Naive thymus-derived CD8-positive, alpha-beta T cell (primary cell): ENCODE measurements at regions of chr17 and their contacts with region 1.

Region 1: DNA sequence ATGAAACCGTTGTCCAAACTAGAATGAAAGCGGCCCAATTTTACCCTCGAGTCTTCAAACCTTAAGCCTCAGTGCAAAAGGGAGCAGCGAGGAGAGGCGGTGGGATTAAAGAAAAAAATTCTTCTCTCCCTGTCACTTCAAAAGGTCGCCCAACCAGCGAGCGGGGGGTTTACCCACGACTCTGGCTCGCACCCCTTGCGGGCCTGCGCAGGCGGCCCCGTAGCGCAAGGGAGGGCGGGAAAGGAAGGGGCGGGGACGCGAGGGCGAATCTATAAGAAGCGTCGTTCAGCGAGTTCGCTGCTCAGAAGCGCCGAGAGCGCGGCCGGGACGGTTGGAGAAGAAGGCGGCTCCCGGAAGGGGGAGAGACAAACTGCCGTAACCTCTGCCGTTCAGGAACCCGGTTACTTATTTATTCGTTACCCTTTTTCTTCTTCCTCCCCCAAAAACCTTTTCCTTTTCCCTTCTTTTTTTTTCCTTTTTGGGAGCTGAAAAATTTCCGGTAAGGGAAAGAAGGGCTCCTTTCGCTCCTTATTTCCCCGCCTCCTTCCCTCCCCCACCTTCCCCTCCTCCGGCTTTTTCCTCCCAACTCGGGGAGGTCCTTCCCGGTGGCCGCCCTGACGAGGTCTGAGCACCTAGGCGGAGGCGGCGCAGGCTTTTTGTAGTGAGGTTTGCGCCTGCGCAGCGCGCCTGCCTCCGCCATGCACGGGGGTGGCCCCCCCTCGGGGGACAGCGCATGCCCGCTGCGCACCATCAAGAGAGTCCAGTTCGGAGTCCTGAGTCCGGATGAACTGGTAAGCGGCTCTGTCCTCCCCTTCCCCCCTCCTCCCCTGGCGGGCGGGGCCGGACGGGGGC is at the start of gene POLR2A:
- DNase-seq: peak; percentile 96 to 99 (median 98)
- ATAC-seq: peak; percentile 59 to 67
- H3K4me3 Mint-ChIP-seq: peak within 1 kb of the TSS; percentile 95 to 100 (median 99)
- H3K27ac Mint-ChIP-seq: peak within 1 kb of the TSS; percentile 97 to 100 (median 100)
- H3K4me1 Mint-ChIP-seq: peaks cover 46 to 80% (median 75%) of the 10 kb centered on the region in 4 donors
- H3K27me3 Mint-ChIP-seq: no peaks in the 10 kb centered on the region
- polyA plus RNA-seq, gene POLR2A: 31.1 to 68.0 (median 47.3) TPM

Region 2: DNA sequence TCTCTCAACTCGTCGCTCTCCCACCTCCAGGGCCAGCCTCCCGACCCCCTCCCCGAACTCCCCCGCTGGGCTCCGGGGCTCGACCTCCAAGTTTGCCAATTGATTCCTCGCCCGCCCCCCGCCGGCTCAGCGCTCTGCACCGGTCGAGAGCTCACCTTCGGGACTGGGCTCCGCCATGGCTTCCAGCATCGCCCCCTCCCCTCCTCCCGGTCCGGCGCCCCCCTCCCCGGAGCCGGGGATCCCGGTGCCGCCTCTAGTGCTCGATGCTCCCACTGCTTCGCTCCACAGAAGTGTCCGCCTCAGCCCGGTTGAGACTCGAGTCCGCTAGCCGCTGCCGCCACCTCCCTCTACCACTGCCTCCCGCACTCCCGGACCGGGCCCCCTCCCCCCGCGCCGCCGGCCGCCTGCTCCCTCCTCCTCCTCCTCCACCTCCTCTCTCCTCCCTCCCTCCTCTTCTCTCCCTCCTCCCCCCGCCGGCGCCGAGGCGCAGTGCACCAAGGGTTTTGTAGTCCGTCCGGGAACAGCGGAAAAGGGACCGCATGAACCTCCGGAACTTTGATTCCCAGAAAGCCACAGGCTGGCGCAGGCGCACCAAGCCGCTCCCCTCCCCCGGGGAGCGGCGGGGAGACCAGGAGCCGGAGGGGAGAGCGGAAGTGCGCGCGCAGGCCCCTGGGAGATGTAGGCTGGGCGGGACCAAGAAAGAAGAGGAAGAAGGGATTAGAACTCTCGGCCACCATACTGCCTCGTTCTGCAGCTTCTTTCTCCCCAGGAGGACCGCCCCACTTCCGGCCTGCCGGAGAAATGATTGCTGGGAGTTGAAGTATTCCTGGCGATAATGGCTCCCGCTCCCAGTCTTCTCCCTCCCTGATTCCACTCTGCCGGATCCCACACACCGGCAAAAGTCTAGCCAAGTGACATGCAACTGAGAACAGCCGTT is 244.9 kb before region 1 on chr17 and contains the start of gene PHF23:
- POLR2A ChIA-PET with region 1: interaction called, 10 read pairs
- DNase-seq: peak; percentile 92 to 98 (median 96)
- ATAC-seq: peak; percentile 51 to 67
- H3K4me3 Mint-ChIP-seq: peak within 1 kb of the TSS; percentile 83 to 100 (median 96)
- H3K27ac Mint-ChIP-seq: peak within 1 kb of the TSS; percentile 81 to 100 (median 98)
- H3K4me1 Mint-ChIP-seq: peaks cover 46 to 75% (median 63%) of the 10 kb centered on the region in 4 donors
- H3K27me3 Mint-ChIP-seq: peaks cover 0 to 4% (median 0%) of the 10 kb centered on the region in 5 donors
- polyA plus RNA-seq, gene PHF23: 18.1 to 35.7 (median 22.2) TPM

Region 3: DNA sequence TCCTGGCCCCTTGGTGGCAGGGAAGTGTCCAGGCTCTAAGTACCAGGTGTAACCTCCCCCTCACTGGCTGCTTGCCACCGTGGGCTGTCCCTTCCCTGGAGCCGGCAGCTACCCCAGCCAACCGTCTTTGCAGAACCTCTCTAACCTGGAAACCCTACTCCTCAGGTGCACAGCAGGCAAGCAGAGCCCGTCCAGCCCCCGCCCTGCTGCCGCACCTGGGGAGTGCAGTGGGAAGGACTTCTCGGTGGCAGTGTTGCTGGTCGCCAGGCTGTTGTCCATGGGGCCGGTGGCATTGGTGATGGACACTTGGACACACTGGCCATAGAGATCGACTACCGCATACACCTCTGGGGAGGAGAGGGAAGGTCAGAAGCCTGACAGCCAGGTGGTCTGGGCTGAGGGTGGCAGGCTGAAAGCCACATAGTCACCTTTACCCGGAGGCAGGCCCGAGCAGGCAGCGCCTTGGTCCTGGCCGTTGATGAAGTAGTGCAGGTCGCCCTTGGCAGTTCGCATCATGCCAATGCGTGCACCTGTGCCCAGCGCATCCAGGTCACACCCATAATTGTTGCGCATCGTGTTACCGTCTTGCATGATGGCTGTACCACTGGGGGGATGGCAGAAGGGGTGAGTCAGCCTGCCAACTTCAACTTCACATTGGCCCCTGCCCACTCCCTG is 161.6 kb before region 1 on chr17:
- POLR2A ChIA-PET with region 1: no interaction called
- DNase-seq: no peak
- ATAC-seq: no peak
- H3K4me3 Mint-ChIP-seq: no peak overlapping the region
- H3K27ac Mint-ChIP-seq: peak overlapping the region in 1 of 10 donors; percentile 52
- H3K4me1 Mint-ChIP-seq: peaks cover 5 to 21% (median 8%) of the 10 kb centered on the region in 4 donors
- H3K27me3 Mint-ChIP-seq: no peaks in the 10 kb centered on the region

Region 4: DNA sequence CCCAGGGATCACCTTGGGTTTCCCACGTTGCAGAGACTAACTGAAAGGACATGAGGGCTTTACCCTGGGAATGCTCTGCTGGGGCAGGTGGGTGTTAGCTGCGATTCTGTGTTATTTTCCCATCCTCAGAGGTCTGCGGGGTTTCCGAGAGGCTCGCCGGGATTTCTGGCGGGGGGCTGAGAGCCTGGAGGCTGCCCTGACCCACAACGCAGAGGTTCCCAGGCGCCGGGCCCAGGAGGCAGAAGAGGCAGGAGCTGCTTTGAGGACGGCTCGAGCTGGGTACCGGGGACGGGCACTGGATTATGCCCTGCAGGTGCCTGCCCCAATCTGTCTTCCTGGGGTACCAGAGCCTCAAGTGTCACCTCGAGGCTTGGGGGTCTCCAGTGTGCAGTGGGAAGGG is 141.0 kb before region 1 on chr17:
- POLR2A ChIA-PET with region 1: no interaction called
- DNase-seq: peak in 1 of 10 donors; percentile 53
- ATAC-seq: no peak
- H3K4me3 Mint-ChIP-seq: no peak overlapping the region
- H3K27ac Mint-ChIP-seq: peak overlapping the region in 6 of 10 donors; percentile 17 to 81 (median 68)
- H3K4me1 Mint-ChIP-seq: peaks cover 9 to 57% (median 37%) of the 10 kb centered on the region in 4 donors
- H3K27me3 Mint-ChIP-seq: no peaks in the 10 kb centered on the region

Region 5: DNA sequence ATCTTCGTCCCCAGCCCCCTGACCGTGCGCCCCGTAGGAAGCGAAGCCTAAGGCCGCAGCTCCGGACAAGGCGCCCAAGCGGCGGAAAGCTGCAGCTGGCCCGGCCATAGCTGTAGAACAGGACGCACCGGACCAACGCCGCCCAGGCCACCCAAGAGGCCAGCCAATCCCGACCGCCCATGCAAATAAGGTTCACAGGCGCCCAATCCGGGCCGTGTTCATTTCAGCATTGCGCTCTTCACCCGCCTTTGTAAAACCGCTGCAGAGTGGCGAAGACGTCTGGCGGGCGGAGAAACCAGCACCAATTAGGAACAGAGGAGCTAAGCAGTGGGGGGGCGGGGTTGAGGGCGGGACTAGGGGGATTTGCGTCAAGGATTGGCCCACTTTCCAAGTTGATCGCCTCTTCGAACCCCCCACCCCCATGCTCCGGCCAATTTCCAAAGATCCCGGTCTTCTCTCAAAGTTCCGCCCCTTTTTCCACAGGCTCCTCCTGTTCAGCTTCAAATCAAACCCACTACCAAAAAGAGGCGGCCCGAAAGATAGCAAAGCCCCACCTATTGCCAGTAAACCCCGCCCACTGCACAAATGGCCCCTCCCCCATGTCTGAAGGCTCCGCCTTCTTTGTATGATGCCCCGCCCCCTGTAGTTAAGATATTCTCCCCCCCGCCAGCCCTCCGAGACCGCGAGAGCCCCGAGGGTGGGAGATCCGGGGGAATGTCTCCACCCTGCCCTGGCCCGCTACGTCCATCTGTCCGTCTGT is 80.1 kb before region 1 on chr17 and contains the start of gene TMEM256:
- POLR2A ChIA-PET with region 1: interaction called, 30 read pairs
- DNase-seq: peak; percentile 89 to 97 (median 93)
- ATAC-seq: peak; percentile 87 to 91
- H3K4me3 Mint-ChIP-seq: peak within 1 kb of the TSS; percentile 92 to 98 (median 96)
- H3K27ac Mint-ChIP-seq: peak within 1 kb of the TSS; percentile 89 to 99 (median 98)
- H3K4me1 Mint-ChIP-seq: peaks cover 15 to 35% (median 28%) of the 10 kb centered on the region in 4 donors
- H3K27me3 Mint-ChIP-seq: peaks cover 0 to 4% (median 0%) of the 10 kb centered on the region in 5 donors
- polyA plus RNA-seq, gene TMEM256: 62.6 to 96.5 (median 81.4) TPM

Region 6: GRCh38 chr17:7454980-7455379 is 29.3 kb before region 1 on chr17:
- POLR2A ChIA-PET with region 1: interaction called, 295 read pairs
- DNase-seq: no peak
- ATAC-seq: peak in 1 of 2 donors; percentile 55
- H3K4me3 Mint-ChIP-seq: peak overlapping the region; percentile 87 to 99 (median 96)
- H3K27ac Mint-ChIP-seq: peak overlapping the region; percentile 86 to 98 (median 92)
- H3K4me1 Mint-ChIP-seq: peaks cover 19 to 45% (median 23%) of the 10 kb centered on the region in 4 donors
- H3K27me3 Mint-ChIP-seq: no peaks in the 10 kb centered on the region

Region 7: DNA sequence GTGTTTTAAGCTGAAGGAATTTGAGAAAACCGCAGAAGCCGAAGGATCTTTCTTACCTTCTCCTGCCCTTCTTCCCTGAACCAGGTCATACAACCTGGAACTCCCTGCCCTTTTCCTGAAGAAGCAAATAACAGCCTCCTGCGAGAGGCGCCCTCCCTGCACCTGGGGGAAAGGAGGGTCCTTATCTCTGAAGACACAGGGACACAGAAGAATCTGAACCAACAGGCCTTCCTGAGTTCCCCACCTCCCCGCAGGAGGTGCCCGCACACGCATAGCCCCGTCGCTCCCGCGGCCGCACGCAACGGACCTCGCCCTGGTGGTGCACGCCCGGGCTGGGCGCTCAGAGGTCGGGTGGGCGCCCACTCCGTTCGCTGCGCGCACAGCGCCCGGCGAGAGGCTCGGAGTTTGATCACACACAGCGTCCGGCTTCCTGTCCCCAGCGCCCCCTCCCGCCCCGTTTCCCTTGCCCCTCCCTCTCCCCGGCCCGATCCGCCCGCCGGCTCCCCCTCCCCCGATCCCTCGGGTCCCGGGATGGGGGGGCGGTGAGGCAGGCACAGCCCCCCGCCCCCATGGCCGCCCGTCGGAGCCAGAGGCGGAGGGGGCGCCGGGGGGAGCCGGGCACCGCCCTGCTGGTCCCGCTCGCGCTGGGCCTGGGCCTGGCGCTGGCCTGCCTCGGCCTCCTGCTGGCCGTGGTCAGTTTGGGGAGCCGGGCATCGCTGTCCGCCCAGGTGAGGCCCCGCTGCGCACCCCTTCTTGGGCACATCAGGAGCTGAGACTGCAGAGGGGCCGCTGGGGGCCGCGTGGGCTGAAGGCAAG is 64.5 kb after region 1 on chr17 and contains the start of gene TNFSF12:
- POLR2A ChIA-PET with region 1: interaction called, 11 read pairs
- DNase-seq: peak in 8 of 10 donors; percentile 34 to 79 (median 52)
- ATAC-seq: peak; percentile 33 to 71
- H3K4me3 Mint-ChIP-seq: peak within 1 kb of the TSS; percentile 72 to 92 (median 88)
- H3K27ac Mint-ChIP-seq: peak within 1 kb of the TSS; percentile 66 to 96 (median 94)
- H3K4me1 Mint-ChIP-seq: peaks cover 28 to 57% (median 54%) of the 10 kb centered on the region in 4 donors
- H3K27me3 Mint-ChIP-seq: no peaks in the 10 kb centered on the region
- polyA plus RNA-seq, gene TNFSF12: 19.3 to 28.6 (median 25.8) TPM

Region 8: DNA sequence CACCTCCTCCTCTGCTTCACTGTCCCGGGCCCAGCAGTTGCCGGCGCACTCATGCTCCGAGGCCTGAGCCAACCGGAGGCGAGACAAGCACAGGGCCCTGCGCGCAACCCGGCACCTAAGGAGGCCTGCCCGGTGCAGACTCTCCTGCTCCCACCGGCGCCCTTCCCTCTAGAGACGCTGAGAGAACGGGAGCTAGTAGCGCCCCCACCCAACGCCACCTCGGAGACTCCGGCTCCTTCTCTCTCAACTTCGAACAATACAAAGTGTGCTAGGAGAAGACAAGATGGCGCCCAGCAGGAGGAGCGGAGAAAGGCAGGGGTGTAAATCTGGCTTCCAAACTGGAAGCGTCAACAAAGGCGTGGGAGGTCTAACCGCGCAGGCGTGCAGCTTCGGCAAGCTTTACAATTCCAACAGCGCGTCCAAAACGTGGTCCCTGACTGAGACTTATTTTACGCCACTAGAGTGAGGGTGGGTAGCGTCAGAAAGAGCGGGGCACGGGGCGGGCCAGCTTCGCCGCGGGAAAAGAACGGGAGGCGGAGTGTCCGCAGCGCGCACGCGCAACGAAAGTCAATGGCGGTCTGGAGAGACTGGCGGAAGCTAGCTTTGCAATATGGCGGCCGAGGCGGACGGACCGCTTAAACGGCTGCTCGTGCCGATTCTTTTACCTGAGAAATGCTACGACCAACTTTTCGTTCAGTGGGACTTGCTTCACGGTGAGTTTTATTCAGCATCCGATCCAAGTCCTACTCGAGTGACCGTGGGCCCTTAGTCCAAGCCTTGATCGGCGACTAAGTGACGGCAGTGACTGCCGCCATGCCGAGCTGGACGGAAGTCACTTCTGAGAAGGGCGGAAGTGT is 99.2 kb after region 1 on chr17 and contains the start of gene MPDU1:
- POLR2A ChIA-PET with region 1: interaction called, 24 read pairs
- DNase-seq: peak; percentile 91 to 98 (median 95)
- ATAC-seq: peak; percentile 84 to 89
- H3K4me3 Mint-ChIP-seq: peak within 1 kb of the TSS; percentile 88 to 100 (median 99)
- H3K27ac Mint-ChIP-seq: peak within 1 kb of the TSS; percentile 96 to 100 (median 100)
- H3K4me1 Mint-ChIP-seq: peaks cover 30 to 69% (median 61%) of the 10 kb centered on the region in 4 donors
- H3K27me3 Mint-ChIP-seq: no peaks in the 10 kb centered on the region
- polyA plus RNA-seq, gene MPDU1: 33.9 to 48.9 (median 41.3) TPM

Region 9: DNA sequence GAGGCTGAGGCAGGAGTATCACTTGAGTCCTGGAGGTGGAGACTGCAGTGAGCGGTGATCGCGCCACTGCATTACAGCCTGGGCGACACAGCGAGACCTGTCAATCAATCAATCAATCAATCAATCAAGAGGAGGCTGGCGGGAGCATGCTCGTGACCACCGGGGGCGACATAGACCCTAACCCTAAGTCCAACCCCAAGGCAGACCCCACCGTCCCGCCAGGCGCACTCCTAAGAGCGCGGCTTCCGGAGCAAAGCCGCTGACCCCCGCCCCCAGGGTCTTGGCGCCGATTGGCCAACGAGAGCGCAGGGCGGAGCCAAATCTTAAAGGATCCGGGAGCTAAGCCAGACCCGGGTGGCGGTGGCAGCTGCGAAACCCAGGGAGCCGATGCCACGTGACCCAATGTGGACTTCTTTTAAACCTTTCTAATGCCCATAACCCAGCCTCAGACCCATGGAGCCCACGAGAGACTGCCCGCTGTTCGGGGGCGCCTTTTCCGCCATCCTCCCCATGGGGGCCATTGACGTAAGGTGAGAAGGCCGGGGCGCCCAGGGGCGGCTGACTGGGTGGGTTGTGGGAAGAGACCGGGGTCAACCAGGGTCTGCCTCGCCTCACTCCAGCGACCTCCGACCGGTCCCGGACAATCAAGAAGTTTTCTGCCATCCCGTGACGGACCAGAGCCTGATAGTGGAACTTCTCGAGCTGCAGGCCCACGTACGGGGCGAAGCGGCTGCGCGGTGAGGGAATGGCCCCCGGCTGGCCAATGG is 804.2 kb after region 1 on chr17 and contains the start of gene RANGRF:
- POLR2A ChIA-PET with region 1: no interaction called
- DNase-seq: peak; percentile 61 to 87 (median 74)
- ATAC-seq: peak; percentile 94 to 96
- H3K4me3 Mint-ChIP-seq: peak within 1 kb of the TSS; percentile 93 to 99 (median 96)
- H3K27ac Mint-ChIP-seq: peak within 1 kb of the TSS; percentile 89 to 99 (median 96)
- H3K4me1 Mint-ChIP-seq: peaks cover 15 to 58% (median 35%) of the 10 kb centered on the region in 4 donors
- H3K27me3 Mint-ChIP-seq: no peaks in the 10 kb centered on the region
- polyA plus RNA-seq, gene RANGRF: 67.2 to 79.6 (median 78.7) TPM